ENCODE measurements at regions of chr7 and their contacts with region 1.

Region 1: GRCh38 chr7:40749877-40750276 is 615.1 kb downstream of the SUGCT start:
- DNase-seq: peak; percentile 9
- ATAC-seq: 0 out of 2 replicates have a peak, but pooled peaks have one; percentile 11
- H3K4me3 ChIP-seq: no peak overlapping the region
- H3K27ac ChIP-seq: no peak overlapping the region
- H3K4me1 ChIP-seq: peaks cover 29% of the 10 kb centered on the region
- H3K27me3 ChIP-seq: no peaks in the 10 kb centered on the region
- CTCF ChIP-seq: no peak

Region 2: DNA sequence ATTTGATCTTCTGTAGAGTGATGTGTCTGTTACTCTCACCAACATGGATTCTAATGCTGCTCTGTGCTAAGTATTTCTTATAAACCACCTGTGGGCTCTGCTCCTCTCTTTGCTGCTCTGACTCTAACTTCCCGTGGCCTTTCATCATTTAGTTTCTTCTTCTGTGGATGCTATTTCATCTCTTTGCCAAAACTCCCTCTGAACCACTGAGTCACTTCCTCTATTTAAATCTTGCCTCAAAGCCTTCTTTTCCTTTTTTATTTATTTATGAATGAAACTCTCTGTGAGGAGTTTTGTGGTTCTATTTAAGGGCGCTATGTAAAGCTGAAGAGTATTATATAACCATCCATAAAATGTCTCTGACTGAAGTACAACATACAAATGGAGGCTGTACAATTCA is 76.6 kb before region 1 on chr7:
- CTCF ChIA-PET with region 1: no interaction called
- POLR2A ChIA-PET with region 1: no interaction called
- intact Hi-C with region 1: loop called (anchors 5 kb)
- DNase-seq: peak; percentile 79
- ATAC-seq: peak; percentile 91
- H3K4me3 ChIP-seq: no peak overlapping the region
- H3K27ac ChIP-seq: peak overlapping the region; percentile 31
- H3K4me1 ChIP-seq: peaks cover 26% of the 10 kb centered on the region
- H3K27me3 ChIP-seq: no peaks in the 10 kb centered on the region
- CTCF ChIP-seq: no peak

Region 3: DNA sequence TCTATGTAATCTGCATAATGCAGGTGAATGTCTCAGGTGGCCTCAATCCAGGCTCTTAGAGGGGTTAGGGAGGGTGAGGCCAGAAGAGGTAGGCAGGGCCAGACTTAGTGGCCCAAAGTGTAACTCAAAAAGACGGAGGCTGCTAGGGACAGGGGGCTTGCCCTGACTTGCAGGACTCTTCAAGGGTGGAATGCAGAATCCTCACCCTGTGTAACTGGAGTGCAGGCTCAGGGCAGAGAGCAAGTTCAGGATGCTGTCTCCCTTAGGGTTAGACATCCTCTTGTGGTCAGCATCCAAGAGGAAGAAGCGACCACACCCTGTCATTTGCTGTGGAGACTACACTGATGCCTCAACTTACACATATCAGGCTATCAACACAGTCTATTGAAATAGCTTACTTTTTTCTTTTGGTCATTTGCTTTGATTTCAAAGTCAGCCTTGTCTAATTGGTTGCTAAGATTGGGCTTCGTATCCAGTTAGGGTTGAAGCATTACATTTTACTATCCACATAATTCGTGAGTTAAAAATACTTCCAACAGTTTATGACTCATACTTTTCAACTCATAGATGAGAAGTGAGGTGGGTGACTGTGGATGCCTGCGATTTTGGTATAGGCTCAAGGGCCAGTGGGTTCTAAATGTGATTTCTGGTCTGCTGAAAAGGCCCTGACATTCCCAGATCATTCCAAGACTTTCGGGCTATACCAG is 51.5 kb before region 1 on chr7:
- CTCF ChIA-PET with region 1: no interaction called
- POLR2A ChIA-PET with region 1: no interaction called
- intact Hi-C with region 1: no loop called
- DNase-seq: peak; percentile 14
- ATAC-seq: no peak; the same call in 1 of the 2 replicates
- H3K4me3 ChIP-seq: no peak overlapping the region
- H3K27ac ChIP-seq: no peak overlapping the region
- H3K4me1 ChIP-seq: peaks cover 3% of the 10 kb centered on the region; the same call in 1 of the 2 replicates
- H3K27me3 ChIP-seq: no peaks in the 10 kb centered on the region
- CTCF ChIP-seq: no peak

Region 4: GRCh38 chr7:40918701-40919271 is 168.9 kb after region 1 on chr7:
- CTCF ChIA-PET with region 1: no interaction called
- POLR2A ChIA-PET with region 1: no interaction called
- intact Hi-C with region 1: no loop called
- DNase-seq: peak; percentile 38
- ATAC-seq: peak; percentile 27; the same call in 1 of the 2 replicates
- H3K4me3 ChIP-seq: no peak overlapping the region
- H3K27ac ChIP-seq: no peak overlapping the region
- H3K4me1 ChIP-seq: peaks cover 20% of the 10 kb centered on the region
- H3K27me3 ChIP-seq: no peaks in the 10 kb centered on the region
- CTCF ChIP-seq: no peak